CD8-positive, alpha-beta memory T cell (primary cell): ENCODE measurements at regions of chr2 and their contacts with region 1.

Region 1: DNA sequence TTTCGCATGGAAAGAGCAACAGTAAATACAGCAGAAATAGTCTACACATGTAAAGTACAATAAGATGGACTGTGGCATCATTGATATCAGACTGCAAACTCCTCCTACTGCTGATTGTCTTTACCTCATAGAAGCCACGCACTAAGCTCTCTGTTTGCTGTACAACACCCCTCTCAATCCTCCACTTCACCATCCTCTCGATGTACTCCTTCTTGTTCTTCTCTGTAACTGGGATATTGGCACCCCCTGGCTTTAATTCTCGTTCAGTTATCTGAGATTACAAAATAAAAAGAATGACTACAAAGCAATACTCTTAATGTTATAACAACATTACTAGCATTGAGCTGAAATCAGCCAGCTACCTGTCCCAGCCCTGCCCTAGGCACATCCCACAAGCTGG is 49.3 kb upstream of the STK17B start:
- DNase-seq: peak in 1 of 5 donors; percentile 61
- H3K4me3 ChIP-seq: no peak overlapping the region
- H3K4me3 Mint-ChIP-seq: peak overlapping the region in 5 of 7 donors; percentile 10 to 39 (median 16)
- H3K27ac ChIP-seq: no peak overlapping the region
- H3K27ac Mint-ChIP-seq: peak overlapping the region in 7 of 8 donors; percentile 9 to 71 (median 45)
- H3K4me1 ChIP-seq: peaks cover 39% of the 10 kb centered on the region
- H3K4me1 Mint-ChIP-seq: peaks cover 42 to 76% (median 70%) of the 10 kb centered on the region in 3 donors
- H3K27me3 ChIP-seq: no peaks in the 10 kb centered on the region
- H3K27me3 Mint-ChIP-seq: no peaks in the 10 kb centered on the region

Region 2: DNA sequence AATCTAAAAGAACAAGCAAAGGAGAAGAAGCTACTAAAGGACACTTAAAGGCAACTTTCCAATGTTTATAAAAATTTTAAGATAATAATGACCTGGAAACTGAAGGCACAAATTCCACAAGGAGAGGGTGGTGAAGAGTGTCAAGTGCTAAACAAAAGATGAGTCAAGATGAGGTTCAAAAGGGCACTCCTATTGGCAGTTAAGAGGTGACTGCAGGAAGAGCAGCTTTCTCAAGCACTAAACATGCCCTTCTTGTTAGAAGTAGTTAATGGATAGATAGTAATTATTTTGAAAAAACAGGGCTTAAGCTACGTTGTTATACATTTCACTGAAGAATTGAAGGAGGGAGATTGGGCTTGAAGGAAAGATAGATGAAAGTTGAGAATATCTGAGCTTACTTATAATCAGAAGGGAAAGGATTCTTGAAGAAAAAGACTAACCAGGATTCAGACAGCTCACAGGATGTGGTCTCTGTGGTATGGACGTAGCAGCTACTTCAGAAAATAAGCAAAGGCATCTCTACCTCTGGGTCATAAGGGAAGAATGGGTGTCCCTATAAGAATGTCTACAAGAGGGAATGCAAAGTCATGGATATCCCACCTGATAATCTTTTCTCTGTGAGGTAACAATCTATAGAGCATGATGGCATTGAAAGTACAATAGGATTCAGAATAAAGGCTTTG is 1018.4 kb before region 1 on chr2:
- CTCF ChIA-PET with region 1: no interaction called
- POLR2A ChIA-PET with region 1: no interaction called
- DNase-seq: peak in 1 of 5 donors; percentile 10
- H3K4me3 ChIP-seq: no peak overlapping the region
- H3K4me3 Mint-ChIP-seq: no peak overlapping the region
- H3K27ac ChIP-seq: no peak overlapping the region
- H3K27ac Mint-ChIP-seq: peak overlapping the region in 3 of 8 donors; percentile 5 to 56 (median 9)
- H3K4me1 ChIP-seq: peaks cover 13% of the 10 kb centered on the region
- H3K4me1 Mint-ChIP-seq: peaks cover 17 to 20% (median 18%) of the 10 kb centered on the region in 3 donors
- H3K27me3 ChIP-seq: no peaks in the 10 kb centered on the region
- H3K27me3 Mint-ChIP-seq: no peaks in the 10 kb centered on the region

Region 3: DNA sequence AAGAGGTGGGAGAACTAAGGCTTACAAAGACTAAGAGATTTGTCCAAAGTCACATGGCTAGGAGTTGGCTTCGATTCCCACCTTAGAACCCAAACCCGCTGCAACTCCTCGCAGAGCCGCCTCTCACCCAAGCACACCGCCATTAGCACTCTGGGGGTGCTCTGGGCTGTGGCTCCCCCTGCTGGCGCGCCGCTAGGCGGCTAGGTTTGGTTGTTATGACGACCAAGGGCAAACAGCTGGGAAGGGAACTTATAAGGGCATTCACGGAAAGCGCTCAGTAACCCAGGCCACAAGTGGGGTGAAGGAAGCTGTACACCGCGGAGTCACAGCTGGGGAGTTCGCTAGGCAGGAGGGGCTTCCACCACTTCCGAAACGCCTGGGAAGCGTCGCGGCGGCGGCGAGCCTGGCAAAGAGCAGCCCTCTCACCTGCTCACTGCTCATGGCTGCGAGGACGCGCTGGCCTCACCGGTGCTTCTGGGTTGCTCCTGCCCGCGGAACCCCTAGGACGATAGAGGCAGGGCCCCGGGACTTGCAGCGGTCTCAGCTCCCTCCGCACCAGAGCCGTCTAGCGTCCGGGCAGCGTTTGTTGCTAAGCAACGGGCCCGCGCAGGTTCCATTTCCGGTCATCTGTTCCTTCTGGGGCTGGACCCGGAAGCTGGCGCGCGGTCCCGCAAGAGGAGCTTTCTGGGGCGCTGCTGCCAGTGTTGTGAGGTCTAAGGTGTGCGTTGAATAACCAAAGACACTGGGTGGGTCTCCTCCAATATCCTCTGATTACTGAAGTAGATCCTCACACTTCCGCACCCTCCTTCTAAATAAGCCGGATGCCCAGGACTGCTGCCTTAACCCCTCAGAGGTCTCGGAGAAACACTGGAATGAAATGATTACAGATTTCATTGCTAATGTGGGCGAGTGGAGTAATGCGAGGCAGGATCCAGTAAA is 152.1 kb before region 1 on chr2 and contains the start of gene DNAH7:
- CTCF ChIA-PET with region 1: interaction called, 15 read pairs
- POLR2A ChIA-PET with region 1: no interaction called
- DNase-seq: peak; percentile 83 to 96 (median 93)
- H3K4me3 ChIP-seq: peak within 1 kb of the TSS; percentile 56
- H3K4me3 Mint-ChIP-seq: peak within 1 kb of the TSS; percentile 70 to 90 (median 81)
- H3K27ac ChIP-seq: peak within 1 kb of the TSS; percentile 48
- H3K27ac Mint-ChIP-seq: peak within 1 kb of the TSS; percentile 66 to 88 (median 81)
- H3K4me1 ChIP-seq: peaks cover 16% of the 10 kb centered on the region
- H3K4me1 Mint-ChIP-seq: peaks cover 9 to 18% (median 16%) of the 10 kb centered on the region in 3 donors
- H3K27me3 ChIP-seq: no peaks in the 10 kb centered on the region
- H3K27me3 Mint-ChIP-seq: peaks cover 2 to 9% of the 10 kb centered on the region in 2 donors
- total RNA-seq, gene DNAH7: not detected

Region 4: DNA sequence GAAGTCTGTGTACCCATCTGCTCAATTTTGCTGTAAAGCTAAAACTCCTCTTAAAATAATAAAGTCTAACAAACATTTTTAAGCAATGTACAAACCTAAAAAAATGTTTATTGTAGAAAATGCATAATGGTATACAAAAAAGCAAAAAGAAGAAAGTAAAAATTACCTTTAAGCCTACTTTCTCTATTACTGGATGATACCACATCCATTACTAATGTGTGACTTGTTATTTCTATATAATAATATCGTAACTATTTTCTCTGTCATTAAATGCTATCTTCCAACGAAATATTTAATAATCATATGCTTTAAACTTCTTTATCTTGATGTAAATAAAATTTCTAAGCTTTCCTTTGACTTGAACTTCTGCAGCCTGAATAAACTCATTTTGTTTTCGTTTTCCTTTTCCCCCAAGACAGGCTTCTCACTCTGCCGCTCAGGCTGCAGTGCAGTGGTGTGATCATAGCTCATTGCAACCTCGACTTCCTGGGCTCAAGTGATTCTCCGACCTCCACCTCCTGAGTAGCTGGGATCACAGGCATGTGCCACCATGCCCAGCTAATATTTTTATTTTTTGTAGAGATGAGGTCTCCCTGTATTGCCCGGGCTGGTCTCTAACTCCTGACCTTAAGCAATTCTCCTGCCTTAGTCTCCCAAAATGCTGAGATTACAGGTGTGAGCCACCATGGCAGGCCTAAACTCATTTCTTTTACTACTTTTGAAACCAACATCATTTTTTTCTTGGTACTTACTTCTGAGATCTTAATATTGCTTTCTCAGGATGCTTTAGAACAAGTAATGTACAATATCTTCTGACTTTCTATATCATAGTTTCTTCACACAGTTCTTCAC is 133.9 kb before region 1 on chr2:
- CTCF ChIA-PET with region 1: interaction called, 11 read pairs
- POLR2A ChIA-PET with region 1: no interaction called
- DNase-seq: no peak
- H3K4me3 ChIP-seq: no peak overlapping the region
- H3K4me3 Mint-ChIP-seq: peak overlapping the region in 6 of 7 donors; percentile 44 to 64 (median 52)
- H3K27ac ChIP-seq: no peak overlapping the region
- H3K27ac Mint-ChIP-seq: peak overlapping the region in 5 of 8 donors; percentile 3 to 71 (median 25)
- H3K4me1 ChIP-seq: peaks cover 5% of the 10 kb centered on the region
- H3K4me1 Mint-ChIP-seq: peaks cover 19 to 47% (median 38%) of the 10 kb centered on the region in 3 donors
- H3K27me3 ChIP-seq: no peaks in the 10 kb centered on the region
- H3K27me3 Mint-ChIP-seq: peaks cover 0 to 2% of the 10 kb centered on the region in 2 donors

Region 5: DNA sequence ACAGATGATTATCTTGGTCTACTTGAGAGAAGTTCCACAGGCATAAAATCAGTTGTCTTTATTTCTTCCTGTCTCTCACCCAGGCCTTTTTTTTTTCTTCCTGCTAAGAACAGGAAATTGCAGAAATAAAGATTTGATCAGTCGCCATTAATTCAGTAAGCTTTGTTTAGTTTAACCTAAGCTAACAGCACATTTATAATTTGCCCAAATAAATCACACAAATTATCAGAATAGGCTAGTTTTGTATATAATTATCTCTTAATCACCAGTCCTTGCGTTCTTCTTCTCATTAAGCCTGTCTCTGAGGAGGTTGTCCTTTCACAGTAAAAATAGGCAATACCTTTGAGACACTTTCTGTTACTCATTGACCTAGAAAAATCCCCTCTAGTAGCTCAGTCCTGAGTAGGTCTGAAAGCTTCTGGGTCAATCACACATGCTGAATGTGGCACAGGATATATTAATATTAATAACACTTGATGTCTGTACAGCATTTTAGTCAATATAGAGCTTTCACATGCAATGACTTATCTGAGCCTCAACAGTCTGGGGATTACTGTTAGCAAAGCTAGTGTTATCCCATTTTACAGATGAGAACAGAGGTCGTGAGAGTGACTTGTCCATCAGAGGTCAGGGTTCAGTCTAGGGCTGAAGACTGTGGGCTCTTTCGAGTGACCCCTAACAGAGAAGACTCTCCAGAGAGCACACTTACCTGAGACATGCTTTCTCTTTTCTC is 38.1 kb before region 1 on chr2:
- CTCF ChIA-PET with region 1: interaction called, 25 read pairs
- POLR2A ChIA-PET with region 1: interaction called, 3 read pairs
- DNase-seq: peak in 1 of 5 donors; percentile 60
- H3K4me3 ChIP-seq: peak overlapping the region; percentile 43
- H3K4me3 Mint-ChIP-seq: peak overlapping the region; percentile 22 to 84 (median 64)
- H3K27ac ChIP-seq: peak overlapping the region; percentile 27
- H3K27ac Mint-ChIP-seq: peak overlapping the region; percentile 91 to 99 (median 98)
- H3K4me1 ChIP-seq: peaks cover 86% of the 10 kb centered on the region
- H3K4me1 Mint-ChIP-seq: peaks cover 82 to 95% (median 87%) of the 10 kb centered on the region in 3 donors
- H3K27me3 ChIP-seq: no peaks in the 10 kb centered on the region
- H3K27me3 Mint-ChIP-seq: no peaks in the 10 kb centered on the region

Region 6: GRCh38 chr2:196277002-196277401 is 56.3 kb after region 1 on chr2:
- CTCF ChIA-PET with region 1: interaction called, 16 read pairs
- POLR2A ChIA-PET with region 1: interaction called, 4 read pairs
- DNase-seq: peak in 3 of 5 donors; percentile 51 to 63 (median 52)
- H3K4me3 ChIP-seq: no peak overlapping the region
- H3K4me3 Mint-ChIP-seq: peak overlapping the region in 5 of 7 donors; percentile 6 to 70 (median 36)
- H3K27ac ChIP-seq: no peak overlapping the region
- H3K27ac Mint-ChIP-seq: peak overlapping the region in 6 of 8 donors; percentile 11 to 84 (median 40)
- H3K4me1 ChIP-seq: peaks cover 34% of the 10 kb centered on the region
- H3K4me1 Mint-ChIP-seq: peaks cover 34 to 39% (median 37%) of the 10 kb centered on the region in 3 donors
- H3K27me3 ChIP-seq: no peaks in the 10 kb centered on the region
- H3K27me3 Mint-ChIP-seq: peaks cover 3 to 5% of the 10 kb centered on the region in 2 donors

Region 7: DNA sequence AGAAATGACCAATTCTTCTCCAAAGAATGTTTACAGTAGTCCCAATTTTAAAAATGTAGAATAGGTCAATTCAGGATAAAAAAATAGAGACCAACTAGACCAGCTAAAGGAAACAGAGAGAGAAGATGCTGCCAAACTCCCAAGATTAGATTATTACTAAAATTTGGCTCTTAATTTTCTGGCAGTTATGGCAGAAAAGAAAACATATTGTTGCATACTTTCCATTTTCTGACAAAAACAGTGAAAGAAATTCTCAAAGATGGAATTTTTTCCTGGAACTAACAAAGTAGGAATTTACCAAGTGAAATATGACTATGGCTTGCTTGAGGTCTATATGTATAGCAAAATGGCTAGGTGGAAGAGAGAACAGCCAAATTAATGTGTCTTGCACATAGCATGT is 89.0 kb after region 1 on chr2:
- CTCF ChIA-PET with region 1: no interaction called
- POLR2A ChIA-PET with region 1: no interaction called
- DNase-seq: no peak
- H3K4me3 ChIP-seq: no peak overlapping the region
- H3K4me3 Mint-ChIP-seq: no peak overlapping the region
- H3K27ac ChIP-seq: no peak overlapping the region
- H3K27ac Mint-ChIP-seq: no peak overlapping the region
- H3K4me1 ChIP-seq: no peaks in the 10 kb centered on the region
- H3K4me1 Mint-ChIP-seq: no peaks in the 10 kb centered on the region
- H3K27me3 ChIP-seq: no peaks in the 10 kb centered on the region
- H3K27me3 Mint-ChIP-seq: peaks cover 0 to 14% of the 10 kb centered on the region in 2 donors